ENCODE measurements at regions of chr2 and their contacts with region 1.

Region 1: GRCh38 chr2:10832203-10832936 is 19.8 kb upstream of the PDIA6 start:
- DNase-seq: peak; percentile 89
- ATAC-seq: peak; percentile 68
- H3K4me3 Mint-ChIP-seq: peak overlapping the region; percentile 65
- H3K27ac Mint-ChIP-seq: no peak overlapping the region
- H3K4me1 Mint-ChIP-seq: peaks cover 14% of the 10 kb centered on the region
- H3K27me3 Mint-ChIP-seq: peaks cover 22% of the 10 kb centered on the region
- CTCF ChIP-seq: peak; percentile 99

Region 2: DNA sequence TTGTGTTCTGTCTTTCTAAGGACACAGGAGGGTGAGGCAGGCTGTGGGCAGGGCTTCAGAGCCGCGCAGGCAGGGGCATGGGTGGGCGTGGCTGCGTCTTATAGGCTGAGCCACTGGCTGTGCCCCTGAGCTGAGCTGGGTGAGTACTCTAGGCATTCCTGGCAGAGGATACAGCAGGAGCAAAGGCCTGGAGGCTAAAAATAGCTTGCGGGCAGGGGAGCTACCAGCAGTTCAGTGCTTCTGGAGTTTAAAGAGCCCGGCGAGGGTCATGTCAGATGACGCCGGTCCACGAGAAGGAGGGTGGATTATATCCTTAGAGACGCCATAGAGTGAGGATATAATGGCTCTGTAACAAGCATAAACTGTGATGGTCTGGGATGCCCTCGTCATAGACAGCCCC is 11.7 kb after region 1 on chr2:
- CTCF ChIA-PET with region 1: interaction called, 50 read pairs
- POLR2A ChIA-PET with region 1: no interaction called
- DNase-seq: peak; percentile 65
- ATAC-seq: peak; percentile 99
- H3K4me3 Mint-ChIP-seq: no peak overlapping the region
- H3K27ac Mint-ChIP-seq: no peak overlapping the region
- H3K4me1 Mint-ChIP-seq: peaks cover 12% of the 10 kb centered on the region
- H3K27me3 Mint-ChIP-seq: peaks cover 6% of the 10 kb centered on the region; the same call in 1 of the 2 replicates
- CTCF ChIP-seq: no peak

Region 3: GRCh38 chr2:10883801-10884478 is 51.6 kb after region 1 on chr2:
- CTCF ChIA-PET with region 1: interaction called, 14 read pairs
- POLR2A ChIA-PET with region 1: no interaction called
- DNase-seq: no peak
- ATAC-seq: peak; percentile 31
- H3K4me3 Mint-ChIP-seq: no peak overlapping the region
- H3K27ac Mint-ChIP-seq: 0 out of 2 replicates have a peak overlapping the region, but pooled peaks have one; percentile 17
- H3K4me1 Mint-ChIP-seq: peaks cover 45% of the 10 kb centered on the region
- H3K27me3 Mint-ChIP-seq: no peaks in the 10 kb centered on the region; the same call in 1 of the 2 replicates
- CTCF ChIP-seq: no peak

Region 4: GRCh38 chr2:10918661-10919409 is 86.5 kb after region 1 on chr2:
- CTCF ChIA-PET with region 1: interaction called, 58 read pairs
- POLR2A ChIA-PET with region 1: no interaction called
- DNase-seq: no peak
- ATAC-seq: no peak
- H3K4me3 Mint-ChIP-seq: no peak overlapping the region
- H3K27ac Mint-ChIP-seq: no peak overlapping the region
- H3K4me1 Mint-ChIP-seq: peaks cover 48% of the 10 kb centered on the region
- H3K27me3 Mint-ChIP-seq: peaks cover 8% of the 10 kb centered on the region
- CTCF ChIP-seq: no peak

Region 5: DNA sequence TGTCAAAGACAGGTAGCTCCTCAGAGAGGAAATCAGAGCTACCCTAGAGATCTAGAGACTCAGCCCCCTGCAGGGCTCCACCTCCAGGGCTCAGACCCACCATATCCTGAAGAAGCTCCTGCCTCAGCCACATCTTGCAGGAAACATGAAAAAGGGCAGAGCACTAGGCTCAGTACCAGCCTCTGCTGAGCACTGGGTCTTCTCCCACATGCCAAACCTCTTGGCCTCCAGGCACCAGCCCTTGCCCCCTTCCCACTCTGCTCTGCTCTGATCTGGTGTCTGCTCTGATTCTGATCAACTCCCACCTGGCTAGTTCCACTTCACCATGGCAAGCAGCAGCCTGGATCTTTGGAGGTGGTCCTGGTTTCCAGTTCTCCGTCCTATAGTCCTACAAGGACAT is 208.6 kb after region 1 on chr2:
- CTCF ChIA-PET with region 1: interaction called, 11 read pairs
- POLR2A ChIA-PET with region 1: no interaction called
- DNase-seq: no peak
- ATAC-seq: peak; percentile 69
- H3K4me3 Mint-ChIP-seq: no peak overlapping the region
- H3K27ac Mint-ChIP-seq: no peak overlapping the region; the same call in 1 of the 2 replicates
- H3K4me1 Mint-ChIP-seq: peaks cover 20% of the 10 kb centered on the region
- H3K27me3 Mint-ChIP-seq: 0 out of 2 replicates have a peak, but pooled peaks cover 8% of the 10 kb centered on the region
- CTCF ChIP-seq: no peak

Region 6: GRCh38 chr2:11092701-11093335 is 260.4 kb after region 1 on chr2:
- CTCF ChIA-PET with region 1: interaction called, 10 read pairs
- POLR2A ChIA-PET with region 1: no interaction called
- DNase-seq: no peak
- ATAC-seq: no peak
- H3K4me3 Mint-ChIP-seq: no peak overlapping the region
- H3K27ac Mint-ChIP-seq: no peak overlapping the region; the same call in 1 of the 2 replicates
- H3K4me1 Mint-ChIP-seq: no peaks in the 10 kb centered on the region
- H3K27me3 Mint-ChIP-seq: no peaks in the 10 kb centered on the region
- CTCF ChIP-seq: no peak